Left ventricle myocardium superior (tissue), 1 donor: ENCODE measurements at regions of chr16 and their contacts with region 1.

Region 1: GRCh38 chr16:86519649-86520316 is 9.5 kb downstream of the FOXF1 start:
- DNase-seq: peak; percentile 78
- ATAC-seq: peak; percentile 61

Region 2: GRCh38 chr16:86072328-86073102 is 447.3 kb before region 1 on chr16:
- intact Hi-C with region 1: loop called (anchors 5 kb)
- DNase-seq: peak; percentile 65
- ATAC-seq: peak; percentile 61

Region 3: DNA sequence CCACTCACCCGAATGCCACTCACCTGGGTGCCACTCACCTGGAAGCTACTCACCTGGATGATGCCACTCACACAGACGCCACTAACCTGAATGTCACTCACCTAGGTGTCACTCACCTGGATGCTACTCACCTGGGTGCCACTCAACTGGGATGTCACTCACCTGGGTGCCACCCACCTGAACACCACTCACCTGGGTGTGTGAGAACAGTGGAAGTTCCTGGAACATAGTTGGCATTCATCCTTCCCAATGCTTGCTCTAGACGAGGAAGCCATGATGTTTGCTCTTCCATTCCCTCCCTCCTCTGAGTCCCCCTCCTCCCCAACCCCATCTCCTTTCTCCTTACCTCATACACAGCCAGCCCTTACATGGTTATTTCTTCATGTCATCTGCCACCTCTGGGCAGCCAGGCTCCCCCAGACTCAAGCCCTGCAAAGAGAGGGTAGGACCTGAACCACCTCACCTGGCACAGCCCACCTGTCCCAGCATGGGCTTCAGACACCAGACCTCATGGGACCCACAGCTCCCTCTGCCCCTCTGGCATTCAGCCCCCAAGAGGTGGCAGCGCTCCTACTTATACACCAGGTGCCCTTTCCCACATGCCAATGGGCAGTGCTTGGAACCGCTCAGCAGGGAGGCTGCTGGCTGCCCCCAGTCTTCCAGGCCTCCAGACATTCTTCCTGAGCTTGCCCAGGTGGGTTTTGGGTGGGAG is 181.2 kb before region 1 on chr16:
- intact Hi-C with region 1: loop called (anchors 10 kb)
- DNase-seq: no peak
- ATAC-seq: no peak

Region 4: DNA sequence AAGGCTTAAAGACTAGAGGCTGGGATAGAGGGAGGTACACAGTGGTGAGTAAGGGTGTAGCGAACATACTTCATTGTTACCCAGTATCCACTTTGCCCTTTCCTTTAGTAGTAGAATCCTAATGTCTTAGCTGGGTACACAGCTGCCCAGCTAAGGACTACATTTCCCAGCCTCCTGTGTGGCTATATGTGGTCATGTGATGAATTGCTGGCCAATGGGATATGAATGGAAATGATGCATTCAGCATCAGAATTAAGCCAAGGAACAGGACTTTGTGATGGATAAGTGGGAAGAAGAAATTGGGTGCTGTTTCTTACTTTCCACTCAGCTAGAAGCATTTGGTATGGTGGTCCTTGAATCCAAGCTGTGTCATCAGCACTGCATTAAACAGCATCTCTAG is 114.5 kb after region 1 on chr16:
- intact Hi-C with region 1: no loop called
- DNase-seq: no peak
- ATAC-seq: no peak